ENCODE measurements at regions of chr16 and their contacts with region 1.

Region 1: DNA sequence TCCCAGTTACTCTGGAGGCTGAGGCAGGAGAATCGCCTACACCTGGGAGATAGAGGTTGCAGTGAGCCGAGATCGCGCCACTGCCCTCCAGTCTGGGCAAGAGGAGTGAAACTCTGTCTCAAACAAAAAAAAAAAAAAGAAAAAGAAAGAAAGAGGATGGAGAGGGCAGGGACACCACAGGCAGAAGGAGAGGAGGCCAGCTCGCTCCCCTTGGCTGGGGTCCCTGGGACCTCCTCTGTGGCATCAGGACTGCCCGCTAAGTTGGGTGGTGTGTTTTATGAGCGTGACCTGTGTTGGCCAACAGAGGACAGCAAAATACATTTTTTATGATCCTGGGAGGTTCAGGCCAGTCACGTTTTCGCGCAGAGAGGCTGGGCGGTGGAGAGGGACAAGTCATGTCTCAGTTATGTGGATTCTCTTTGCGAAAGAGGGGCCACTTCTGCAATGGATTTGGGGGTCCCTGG is 229.6 kb downstream of the MRTFB start:
- DNase-seq: peak; percentile 78
- H3K4me3 Mint-ChIP-seq: peak overlapping the region; percentile 77
- H3K27ac Mint-ChIP-seq: no peak overlapping the region
- H3K4me1 Mint-ChIP-seq: peaks cover 12% of the 10 kb centered on the region
- H3K27me3 Mint-ChIP-seq: peaks cover 23% of the 10 kb centered on the region

Region 2: DNA sequence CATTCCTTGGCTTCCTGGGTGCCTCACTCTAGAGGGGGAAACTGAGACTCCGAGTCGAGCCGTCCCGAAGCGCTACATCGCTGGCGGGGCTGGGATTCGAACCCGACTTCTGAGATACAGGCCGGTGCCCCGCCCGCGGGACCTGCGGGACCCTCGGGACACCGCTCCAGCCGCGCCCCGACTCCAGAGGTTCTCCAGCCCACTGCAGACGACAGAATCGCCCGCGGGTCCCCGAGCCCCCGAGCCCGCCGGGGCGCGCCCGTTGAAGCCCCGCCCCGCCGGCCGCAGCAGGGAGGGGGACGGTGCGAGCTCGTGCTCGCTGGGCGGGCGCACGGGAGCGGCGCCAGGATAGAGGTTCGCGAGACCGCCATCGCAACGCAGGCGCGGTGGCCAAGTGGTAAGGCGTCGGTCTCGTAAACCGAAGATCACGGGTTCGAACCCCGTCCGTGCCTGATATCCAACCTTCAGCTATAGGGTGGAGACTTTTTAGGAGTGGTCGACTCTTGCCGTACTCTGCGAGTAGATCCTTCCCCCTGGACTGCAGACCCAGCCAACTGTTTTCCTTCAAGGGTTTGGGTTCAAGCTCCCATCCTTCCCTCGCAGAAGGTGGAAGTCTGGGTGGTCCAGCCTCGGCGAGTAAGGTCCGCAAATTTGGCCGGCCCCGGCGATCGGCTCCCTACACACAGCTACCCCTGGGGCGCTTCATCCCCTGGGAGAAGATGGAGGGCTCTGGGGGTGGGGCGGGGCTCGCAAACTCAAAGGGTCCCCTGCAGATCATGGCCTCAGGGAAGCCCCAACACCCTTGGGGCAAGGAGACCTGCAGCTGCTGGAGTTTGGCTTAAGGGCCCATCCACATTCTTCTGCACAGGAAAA is 15.0 kb before region 1 on chr16:
- intact Hi-C with region 1: loop called (anchors 2 kb)
- DNase-seq: peak; percentile 99
- H3K4me3 Mint-ChIP-seq: peak overlapping the region; percentile 88
- H3K27ac Mint-ChIP-seq: peak overlapping the region; percentile 80
- H3K4me1 Mint-ChIP-seq: peaks cover 15% of the 10 kb centered on the region
- H3K27me3 Mint-ChIP-seq: peaks cover 2% of the 10 kb centered on the region

Region 3: GRCh38 chr16:14321542-14321941 is 20.8 kb after region 1 on chr16:
- intact Hi-C with region 1: no loop called
- DNase-seq: no peak
- H3K4me3 Mint-ChIP-seq: no peak overlapping the region
- H3K27ac Mint-ChIP-seq: no peak overlapping the region
- H3K4me1 Mint-ChIP-seq: peaks cover 1% of the 10 kb centered on the region
- H3K27me3 Mint-ChIP-seq: no peaks in the 10 kb centered on the region

Region 4: DNA sequence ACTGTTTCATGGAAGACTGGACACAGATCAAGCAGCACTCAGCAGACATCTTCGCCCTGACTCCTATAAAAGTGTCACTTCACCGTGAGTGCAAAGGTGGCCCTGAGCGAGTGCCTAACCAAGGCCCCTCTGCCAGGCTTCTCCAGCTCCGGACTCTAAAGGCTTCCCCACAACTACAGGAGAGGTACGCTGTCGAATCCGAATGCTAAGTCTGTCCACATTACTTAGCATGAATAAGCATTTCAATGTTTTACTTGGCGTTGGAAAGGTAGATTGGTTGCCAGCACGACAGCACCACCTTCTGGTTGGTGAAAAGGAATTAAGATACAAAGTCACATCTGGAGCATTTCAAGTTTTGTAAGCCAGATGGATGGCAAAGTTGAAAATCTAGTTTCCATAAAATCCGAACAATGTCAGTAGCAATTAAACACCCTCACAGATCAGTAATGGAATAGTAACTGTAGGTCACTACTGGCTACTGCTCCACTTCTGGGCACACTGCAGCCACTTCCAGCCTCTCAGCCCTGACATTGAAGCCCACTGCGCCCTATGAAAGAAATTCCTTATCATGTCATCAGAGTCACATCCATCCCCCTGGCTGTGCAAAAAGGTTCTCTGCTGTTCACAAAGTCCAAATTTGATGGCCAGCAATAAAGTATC is 228.4 kb after region 1 on chr16:
- intact Hi-C with region 1: loop called (anchors 1 kb)
- DNase-seq: peak; percentile 85
- H3K4me3 Mint-ChIP-seq: no peak overlapping the region
- H3K27ac Mint-ChIP-seq: no peak overlapping the region
- H3K4me1 Mint-ChIP-seq: peaks cover 5% of the 10 kb centered on the region
- H3K27me3 Mint-ChIP-seq: no peaks in the 10 kb centered on the region

Region 5: GRCh38 chr16:14632692-14633569 is 332.2 kb after region 1 on chr16 and contains the start of gene BFAR:
- intact Hi-C with region 1: loop called (anchors 2 kb)
- DNase-seq: peak; percentile 100
- H3K4me3 Mint-ChIP-seq: peak within 1 kb of the TSS; percentile 100
- H3K27ac Mint-ChIP-seq: peak within 1 kb of the TSS; percentile 100
- H3K4me1 Mint-ChIP-seq: peaks cover 46% of the 10 kb centered on the region
- H3K27me3 Mint-ChIP-seq: no peaks in the 10 kb centered on the region
- total RNA-seq, gene BFAR: 59.3 and 63.4 TPM in 2 replicates

Measured in activated CD4-positive, alpha-beta T cell treated with anti-CD3 and anti-CD28 coated beads, Interleukin-2, amount 10 ng/mL, durations not matched to agents 24 days and 14 days (primary cell).